Activated T-helper 2 cell treated with anti-CD3 and anti-CD28 coated beads, Interferon-gamma antibody, Interleukin-2, Interleukin-4, amounts not matched to agents 10 μg/mL and 5 μg/mL and 100 μg/mL, durations not matched to agents 14 hours and 24 hours and 36 hours (primary cell): ENCODE measurements at regions of chr5 and their contacts with region 1.

Region 1: GRCh38 chr5:100840384-100840783 is 62.7 kb downstream of the ST8SIA4 start:
- DNase-seq: no peak
- H3K4me3 Mint-ChIP-seq: no peak overlapping the region
- H3K27ac Mint-ChIP-seq: peak overlapping the region; percentile 93
- H3K4me1 Mint-ChIP-seq: peaks cover 73% of the 10 kb centered on the region
- H3K27me3 Mint-ChIP-seq: no peaks in the 10 kb centered on the region

Region 2: DNA sequence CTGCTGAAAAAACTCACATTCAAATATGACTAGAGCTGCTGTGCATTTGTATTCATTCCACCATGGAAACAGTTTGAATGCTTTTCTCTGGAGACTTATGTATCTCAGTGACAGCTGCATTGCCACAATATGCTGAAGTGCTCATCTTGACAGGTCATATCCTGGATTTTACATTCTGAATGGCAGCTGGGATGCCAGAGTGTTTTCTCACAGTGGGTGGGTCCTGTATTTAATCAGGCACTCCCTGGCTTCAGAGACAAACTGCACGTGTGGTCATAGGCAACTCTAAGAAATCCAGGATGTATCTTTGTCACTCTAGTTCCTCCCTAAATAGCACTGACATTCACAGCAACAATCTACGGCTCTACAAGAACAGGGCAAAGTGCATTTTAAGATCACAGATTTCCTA is 12.9 kb before region 1 on chr5:
- intact Hi-C with region 1: loop called (anchors 1 kb)
- DNase-seq: no peak
- H3K4me3 Mint-ChIP-seq: no peak overlapping the region
- H3K27ac Mint-ChIP-seq: peak overlapping the region; percentile 79
- H3K4me1 Mint-ChIP-seq: peaks cover 40% of the 10 kb centered on the region
- H3K27me3 Mint-ChIP-seq: no peaks in the 10 kb centered on the region

Region 3: DNA sequence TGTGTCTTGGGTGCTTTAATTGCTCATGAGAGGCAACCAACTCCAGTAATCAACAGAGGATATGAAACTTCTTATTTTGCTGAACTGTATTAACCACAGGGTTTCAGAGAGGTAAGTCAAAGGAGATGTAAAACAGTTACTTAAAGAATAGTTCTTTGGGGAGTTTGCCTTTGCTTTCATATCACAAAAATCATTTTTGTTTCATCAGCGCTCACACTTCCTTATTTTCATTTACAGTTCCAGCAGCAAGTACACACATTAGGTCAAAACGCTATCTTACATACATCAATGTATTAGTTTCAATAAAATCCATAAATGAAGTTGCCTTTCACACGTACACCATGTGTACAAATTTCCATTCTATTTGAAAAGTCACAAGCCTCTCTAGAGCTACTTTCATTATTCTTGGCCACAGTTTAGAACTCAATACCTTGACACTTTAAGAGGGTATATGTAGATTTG is 12.6 kb after region 1 on chr5:
- intact Hi-C with region 1: loop called (anchors 1 kb)
- DNase-seq: no peak
- H3K4me3 Mint-ChIP-seq: peak overlapping the region; percentile 72
- H3K27ac Mint-ChIP-seq: peak overlapping the region; percentile 97
- H3K4me1 Mint-ChIP-seq: peaks cover 42% of the 10 kb centered on the region
- H3K27me3 Mint-ChIP-seq: no peaks in the 10 kb centered on the region

Region 4: GRCh38 chr5:100860407-100860806 is 20.0 kb after region 1 on chr5:
- intact Hi-C with region 1: loop called (anchors 1 kb)
- DNase-seq: no peak
- H3K4me3 Mint-ChIP-seq: peak overlapping the region; percentile 64
- H3K27ac Mint-ChIP-seq: peak overlapping the region; percentile 93
- H3K4me1 Mint-ChIP-seq: peaks cover 66% of the 10 kb centered on the region
- H3K27me3 Mint-ChIP-seq: no peaks in the 10 kb centered on the region

Region 5: GRCh38 chr5:100872408-100873190 is 32.2 kb after region 1 on chr5:
- intact Hi-C with region 1: loop called (anchors 1 kb)
- DNase-seq: no peak
- H3K4me3 Mint-ChIP-seq: no peak overlapping the region
- H3K27ac Mint-ChIP-seq: peak overlapping the region; percentile 61
- H3K4me1 Mint-ChIP-seq: peaks cover 63% of the 10 kb centered on the region
- H3K27me3 Mint-ChIP-seq: no peaks in the 10 kb centered on the region

Region 6: DNA sequence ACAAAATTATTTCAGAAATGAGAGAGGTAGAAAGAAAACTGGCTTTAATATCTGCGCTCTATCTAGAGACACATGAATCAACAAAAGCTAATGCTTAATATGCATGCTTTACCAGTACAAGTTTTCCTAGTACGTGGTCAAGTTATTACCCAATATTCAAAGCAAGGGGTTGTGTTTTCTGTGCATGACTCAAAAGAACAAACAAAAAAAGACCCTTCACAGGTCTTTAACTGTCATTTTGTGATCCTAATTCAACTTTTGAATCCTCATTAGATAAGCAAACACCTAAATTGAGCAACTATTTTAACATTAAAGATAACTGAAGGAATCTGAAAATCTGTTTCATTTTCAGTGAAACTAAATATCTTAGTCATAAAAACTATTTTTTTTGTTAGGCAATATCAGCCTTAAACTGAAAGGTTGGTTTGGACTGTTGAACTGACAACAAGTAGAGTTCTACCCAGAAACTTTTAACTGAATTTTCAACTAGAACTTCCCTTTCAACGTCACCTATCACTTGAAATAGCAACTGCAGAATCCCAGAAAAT is 50.2 kb after region 1 on chr5:
- intact Hi-C with region 1: loop called (anchors 2 kb)
- DNase-seq: no peak
- H3K4me3 Mint-ChIP-seq: peak overlapping the region; percentile 75
- H3K27ac Mint-ChIP-seq: peak overlapping the region; percentile 93
- H3K4me1 Mint-ChIP-seq: peaks cover 74% of the 10 kb centered on the region
- H3K27me3 Mint-ChIP-seq: no peaks in the 10 kb centered on the region